Posterior vena cava (tissue), 2 donors: ENCODE measurements at regions of chr1 and their contacts with region 1.

Region 1: DNA sequence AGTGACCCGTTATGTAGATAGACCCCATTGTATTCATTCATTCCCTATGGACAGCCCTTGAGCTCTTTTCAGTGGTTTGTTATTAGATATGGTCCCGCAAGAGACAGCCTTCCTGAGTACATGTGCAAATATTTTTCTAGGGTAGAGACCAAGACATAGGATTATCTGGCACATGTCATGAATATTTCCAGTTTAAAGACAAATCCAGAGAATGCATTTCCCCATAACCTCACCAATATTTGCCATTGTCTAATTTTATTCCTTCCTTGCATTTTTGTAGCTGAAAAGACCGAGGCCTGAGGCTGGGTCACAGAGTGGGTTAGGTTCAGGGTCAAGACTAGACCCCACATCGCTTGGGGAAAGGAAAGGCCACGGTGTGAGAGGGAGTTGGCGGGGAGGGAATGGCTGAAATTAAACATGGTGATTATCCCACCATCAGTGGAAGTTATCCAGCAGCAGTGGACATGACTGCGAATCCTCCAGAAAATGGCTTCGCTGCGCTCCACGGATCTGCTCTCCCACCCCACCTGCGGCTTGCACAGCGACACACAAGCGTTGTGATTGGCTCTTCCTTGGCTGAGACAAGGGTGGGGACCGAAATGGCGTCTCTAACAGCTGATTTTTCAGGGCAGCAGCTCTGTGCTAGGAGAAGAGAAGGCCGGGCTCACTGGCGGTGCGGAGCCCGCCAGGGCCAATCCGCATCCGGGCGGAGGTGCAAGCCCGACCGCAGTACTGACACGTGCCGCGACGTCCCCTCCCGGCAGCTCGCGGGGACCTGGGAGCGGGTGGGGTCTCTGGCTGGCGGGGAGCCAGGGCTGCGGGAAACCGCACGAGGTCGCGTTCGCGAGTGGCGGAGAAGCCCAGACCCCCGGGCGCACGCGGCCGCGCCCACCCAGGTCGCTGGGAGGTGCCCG is 16.1 kb upstream of the STMN1 start:
- DNase-seq: peak; percentile 80

Region 2: DNA sequence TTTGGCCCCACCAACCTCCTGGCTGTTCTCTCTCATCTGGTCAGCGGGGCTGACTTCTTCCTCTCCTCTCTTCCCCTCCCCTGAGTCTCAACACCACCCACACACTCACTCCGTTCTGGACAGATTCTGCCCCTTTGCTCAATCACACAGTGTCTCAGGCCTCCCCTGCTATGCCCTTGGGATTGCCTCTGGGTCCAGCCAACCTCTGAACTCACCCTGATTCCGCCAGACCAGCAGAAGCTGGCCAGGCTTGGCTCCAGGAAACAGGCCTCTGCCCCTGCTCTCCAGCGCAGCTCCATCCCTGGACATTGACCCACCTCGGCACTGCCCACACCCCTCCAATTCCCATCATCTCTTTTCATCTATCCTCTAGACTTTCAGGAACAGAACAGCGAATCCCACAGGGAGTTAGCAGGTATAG is 1659.5 kb after region 1 on chr1:
- intact Hi-C with region 1: loop called in 1 of 2 experiments (anchors 5 kb)
- DNase-seq: no peak